Ovary (tissue), 10 donors: ENCODE measurements at regions of chr4 and their contacts with region 1.

Region 1: DNA sequence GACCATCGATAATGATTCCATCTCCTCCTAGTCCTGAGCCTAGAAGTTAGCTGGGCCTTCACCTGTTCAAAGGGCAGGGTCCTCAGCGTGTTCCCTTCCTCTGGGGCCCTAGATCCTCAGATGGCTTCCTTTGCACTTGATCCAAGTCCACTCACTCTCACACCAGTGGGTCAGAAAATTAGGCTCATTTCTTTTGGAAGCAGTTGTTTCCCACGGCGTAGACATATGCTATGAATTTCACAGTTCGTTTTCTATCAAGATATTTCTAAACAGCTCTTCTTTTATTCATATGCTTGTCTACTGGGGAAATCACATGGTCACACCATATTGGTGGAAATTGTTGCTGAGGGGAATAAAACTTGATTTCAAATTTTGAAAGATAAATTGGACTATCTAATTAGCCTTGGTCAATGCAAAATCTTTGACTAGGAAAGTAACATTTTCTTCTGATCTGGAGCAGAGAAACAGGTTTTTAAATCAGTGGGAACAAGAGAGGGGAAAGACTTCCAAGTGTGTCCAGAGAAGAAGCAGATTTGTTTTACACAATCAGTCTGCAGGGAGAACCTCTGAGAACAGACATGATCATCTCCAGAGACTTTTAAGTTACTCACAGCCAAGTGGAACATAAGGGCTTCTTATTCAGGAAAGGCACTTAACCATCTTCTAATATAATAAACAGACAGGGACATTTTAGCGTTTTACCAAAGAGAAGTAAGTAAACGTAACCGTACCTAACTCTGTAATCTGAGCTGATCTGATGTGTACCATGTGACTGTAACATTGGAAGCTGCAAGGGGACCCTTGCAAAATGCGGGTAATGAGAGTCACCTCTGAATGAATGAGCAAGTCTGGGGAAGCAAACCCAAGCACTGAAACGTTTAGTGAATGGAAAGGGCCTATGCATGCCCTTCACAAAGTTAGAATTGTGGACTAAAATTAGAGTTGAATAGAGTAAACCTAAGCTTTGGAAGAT is 455.7 kb upstream of the FAT1 start:
- DNase-seq: no peak
- H3K4me3 ChIP-seq: no peak overlapping the region
- H3K27ac ChIP-seq: no peak overlapping the region
- H3K4me1 ChIP-seq: no peaks in the 10 kb centered on the region
- H3K27me3 ChIP-seq: no peaks in the 10 kb centered on the region
- CTCF ChIP-seq: no peak
- EP300 ChIP-seq: no peak
- POLR2A ChIP-seq: no peak

Region 2: DNA sequence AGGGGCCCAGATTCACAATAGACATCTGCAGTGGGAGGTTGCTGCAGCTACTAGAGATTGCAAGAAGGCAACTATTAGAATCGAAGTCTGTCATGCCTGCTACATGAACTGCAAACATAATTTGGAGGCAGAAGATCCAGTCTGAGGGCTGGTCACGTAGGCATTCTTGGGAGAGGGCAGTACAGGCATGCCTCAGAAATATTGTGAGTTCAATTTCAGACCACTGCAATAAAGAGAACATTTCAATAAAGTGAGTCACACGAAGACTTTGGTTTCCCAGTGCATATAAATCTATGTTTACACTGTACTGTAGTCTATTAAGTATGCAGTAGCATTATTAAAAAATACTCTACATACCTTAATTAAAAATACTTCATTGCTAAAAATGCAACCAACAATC is 130.1 kb after region 1 on chr4:
- intact Hi-C with region 1: loop called in 1 of 4 experiments (anchors 5 kb)
- DNase-seq: no peak
- H3K4me3 ChIP-seq: no peak overlapping the region
- H3K27ac ChIP-seq: no peak overlapping the region
- H3K4me1 ChIP-seq: no peaks in the 10 kb centered on the region
- H3K27me3 ChIP-seq: no peaks in the 10 kb centered on the region
- CTCF ChIP-seq: no peak
- EP300 ChIP-seq: no peak
- POLR2A ChIP-seq: no peak

Region 3: GRCh38 chr4:187370918-187371317 is 191.5 kb after region 1 on chr4:
- intact Hi-C with region 1: no loop called
- DNase-seq: no peak
- H3K4me3 ChIP-seq: no peak overlapping the region
- H3K27ac ChIP-seq: no peak overlapping the region
- H3K4me1 ChIP-seq: no peaks in the 10 kb centered on the region
- H3K27me3 ChIP-seq: no peaks in the 10 kb centered on the region
- CTCF ChIP-seq: no peak
- EP300 ChIP-seq: no peak
- POLR2A ChIP-seq: no peak